Activated B cell treated with CpG ODN at 0.5 μM for 24 hours (primary cell): ENCODE measurements at regions of chr1 and their contacts with region 1.

Region 1: GRCh38 chr1:40315239-40315794 is 1.8 kb downstream of the COL9A2 start:
- DNase-seq: peak; percentile 84
- ATAC-seq: peak; percentile 61
- H3K4me3 Mint-ChIP-seq: peak overlapping the region; percentile 85
- H3K27ac Mint-ChIP-seq: peak overlapping the region; percentile 51
- H3K4me1 Mint-ChIP-seq: peaks cover 53% of the 10 kb centered on the region
- H3K27me3 Mint-ChIP-seq: peaks cover 7% of the 10 kb centered on the region
- CTCF ChIP-seq: no peak

Region 2: DNA sequence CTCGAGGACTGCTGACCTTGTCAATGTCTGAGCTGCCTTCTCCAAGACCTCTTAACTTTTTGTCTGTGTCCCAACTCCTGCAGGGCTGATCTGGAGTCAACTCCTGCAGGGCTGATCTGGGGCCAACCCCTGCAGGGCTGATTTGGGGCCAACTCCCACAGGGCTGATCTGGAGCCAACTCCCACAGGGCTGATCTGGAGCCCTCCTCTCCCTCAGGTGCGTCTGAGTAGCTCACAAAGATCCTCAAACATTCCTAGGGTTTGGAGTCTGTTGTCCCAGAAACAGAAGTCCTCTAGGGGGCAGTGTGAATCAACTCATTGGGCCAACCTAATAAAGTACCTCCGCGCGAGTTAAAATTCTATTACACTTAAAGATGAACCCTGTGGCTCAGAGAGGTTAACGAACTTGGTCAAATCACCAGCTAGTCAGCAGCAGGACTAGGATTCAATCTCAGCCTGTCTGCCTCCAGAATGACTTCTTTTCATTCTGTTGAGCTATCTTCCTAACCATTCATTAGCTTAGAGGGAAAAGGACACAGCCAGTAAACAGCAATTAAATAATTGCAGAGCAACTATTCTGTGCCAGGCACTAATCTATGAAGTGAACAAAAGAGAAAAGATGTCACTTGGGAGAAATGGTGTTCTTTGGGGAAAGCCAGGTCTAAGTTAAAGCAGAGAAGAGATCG is 171.3 kb before region 1 on chr1:
- CTCF ChIA-PET with region 1: interaction called, 24 read pairs
- POLR2A ChIA-PET with region 1: interaction called, 6 read pairs
- intact Hi-C with region 1: no loop called
- DNase-seq: peak; percentile 22
- ATAC-seq: peak; percentile 83
- H3K4me3 Mint-ChIP-seq: no peak overlapping the region
- H3K27ac Mint-ChIP-seq: no peak overlapping the region
- H3K4me1 Mint-ChIP-seq: peaks cover 6% of the 10 kb centered on the region
- H3K27me3 Mint-ChIP-seq: peaks cover 9% of the 10 kb centered on the region
- CTCF ChIP-seq: no peak

Region 3: DNA sequence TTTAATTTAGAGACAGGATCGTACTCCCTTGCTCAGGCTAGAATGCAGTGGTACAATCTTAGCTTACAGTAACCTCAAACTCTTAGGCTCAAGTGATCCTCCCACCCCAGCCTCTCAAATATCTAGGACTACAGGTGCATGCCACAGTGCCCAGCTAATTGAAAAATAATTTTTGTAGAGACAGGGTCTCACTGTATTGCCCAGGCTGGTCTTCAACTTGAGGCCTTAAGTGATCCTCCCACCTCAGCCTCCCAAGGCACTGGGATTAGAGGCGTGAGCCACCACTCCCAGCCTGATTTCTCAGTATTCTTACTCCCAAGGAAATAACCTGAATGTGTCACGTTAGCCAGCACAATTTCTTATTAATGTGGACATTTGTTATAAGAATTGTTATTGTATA is 144.3 kb before region 1 on chr1:
- CTCF ChIA-PET with region 1: no interaction called
- POLR2A ChIA-PET with region 1: no interaction called
- intact Hi-C with region 1: no loop called
- DNase-seq: no peak
- ATAC-seq: no peak
- H3K4me3 Mint-ChIP-seq: no peak overlapping the region
- H3K27ac Mint-ChIP-seq: no peak overlapping the region
- H3K4me1 Mint-ChIP-seq: peaks cover 54% of the 10 kb centered on the region
- H3K27me3 Mint-ChIP-seq: no peaks in the 10 kb centered on the region
- CTCF ChIP-seq: no peak

Region 4: GRCh38 chr1:40232444-40232843 is 82.9 kb before region 1 on chr1:
- CTCF ChIA-PET with region 1: interaction called, 4 read pairs
- POLR2A ChIA-PET with region 1: interaction called, 10 read pairs
- intact Hi-C with region 1: no loop called
- DNase-seq: no peak
- ATAC-seq: peak; percentile 86
- H3K4me3 Mint-ChIP-seq: no peak overlapping the region
- H3K27ac Mint-ChIP-seq: peak overlapping the region; percentile 24
- H3K4me1 Mint-ChIP-seq: peaks cover 11% of the 10 kb centered on the region
- H3K27me3 Mint-ChIP-seq: no peaks in the 10 kb centered on the region
- CTCF ChIP-seq: no peak

Region 5: DNA sequence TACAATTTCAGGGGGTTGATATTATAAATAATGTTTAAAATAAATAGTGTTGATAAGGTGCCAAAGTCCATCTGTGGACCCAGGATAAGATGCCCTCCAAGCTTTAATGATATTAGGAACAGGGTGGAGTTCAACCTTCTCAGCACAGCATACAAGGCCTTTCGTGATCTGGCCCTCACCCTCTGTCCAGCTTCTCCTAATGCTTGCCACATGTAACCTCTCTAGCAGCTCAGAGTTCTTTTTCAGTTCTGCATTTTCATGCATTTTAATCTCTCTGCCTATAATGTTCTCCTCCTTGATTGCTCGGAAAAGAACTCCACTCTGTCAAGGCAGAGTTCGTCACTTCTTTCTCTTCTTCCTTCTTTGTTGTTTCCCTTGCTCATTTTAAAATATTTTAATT is 36.8 kb after region 1 on chr1:
- CTCF ChIA-PET with region 1: interaction called, 11 read pairs
- POLR2A ChIA-PET with region 1: interaction called, 4 read pairs
- intact Hi-C with region 1: no loop called
- DNase-seq: no peak
- ATAC-seq: peak; percentile 94
- H3K4me3 Mint-ChIP-seq: peak overlapping the region; percentile 65
- H3K27ac Mint-ChIP-seq: peak overlapping the region; percentile 81
- H3K4me1 Mint-ChIP-seq: peaks cover 54% of the 10 kb centered on the region
- H3K27me3 Mint-ChIP-seq: no peaks in the 10 kb centered on the region
- CTCF ChIP-seq: no peak

Region 6: GRCh38 chr1:40404670-40405462 is 89.5 kb after region 1 on chr1:
- CTCF ChIA-PET with region 1: interaction called, 28 read pairs
- POLR2A ChIA-PET with region 1: interaction called, 17 read pairs
- intact Hi-C with region 1: loop called (anchors 1 kb)
- DNase-seq: no peak
- ATAC-seq: no peak
- H3K4me3 Mint-ChIP-seq: peak overlapping the region; percentile 56
- H3K27ac Mint-ChIP-seq: peak overlapping the region; percentile 84
- H3K4me1 Mint-ChIP-seq: peaks cover 62% of the 10 kb centered on the region
- H3K27me3 Mint-ChIP-seq: no peaks in the 10 kb centered on the region
- CTCF ChIP-seq: peak; percentile 86